CD4-positive, alpha-beta memory T cell (primary cell): ENCODE measurements at regions of chr14 and their contacts with region 1.

Region 1: DNA sequence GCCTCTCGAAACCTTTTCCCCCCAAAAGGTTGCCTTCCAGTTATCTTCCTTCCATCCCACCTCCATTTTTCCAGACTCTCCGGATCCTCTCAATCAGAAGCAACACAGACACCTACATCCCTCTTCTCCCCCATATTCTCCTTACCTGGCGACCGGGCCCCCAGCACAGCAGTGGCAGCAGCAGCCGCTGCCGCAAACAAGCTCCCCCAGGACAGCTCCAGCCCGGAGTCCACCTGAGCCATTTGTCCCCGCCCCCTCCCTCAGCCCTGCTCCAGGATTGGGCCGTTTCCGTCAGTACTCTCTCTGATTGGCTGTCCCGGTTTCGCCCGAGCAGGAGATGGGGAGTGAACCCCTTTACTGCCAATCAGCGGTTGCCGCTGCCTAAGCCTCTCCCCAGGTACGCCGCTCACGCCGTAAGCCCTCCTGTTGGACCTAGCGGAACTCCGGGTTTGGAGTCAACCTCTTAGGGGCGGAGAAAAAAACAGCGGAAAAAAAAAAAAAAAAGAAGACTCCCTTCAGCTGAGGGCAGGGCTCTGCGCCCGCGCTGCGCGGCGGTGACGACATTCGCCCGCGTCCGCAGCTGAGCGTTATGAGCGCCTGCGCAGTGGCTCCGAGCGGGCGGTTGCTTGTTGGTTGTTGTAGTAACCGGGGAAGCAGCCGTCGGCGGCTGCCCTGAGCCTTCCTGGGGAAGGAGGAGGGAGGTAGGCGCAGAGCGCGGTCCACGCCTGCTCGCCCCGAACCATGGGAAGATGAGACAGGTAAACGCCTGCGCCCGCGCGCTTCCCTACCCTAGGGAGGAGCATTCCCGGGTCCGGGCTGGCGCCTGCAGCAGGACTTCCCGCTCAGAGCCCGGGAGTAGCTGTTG is at the starts of genes ERG28 and TTLL5:
- DNase-seq: peak; percentile 97 to 99 (median 98)
- H3K4me3 ChIP-seq: peak within 1 kb of the TSS; percentile 92 to 95
- H3K4me3 Mint-ChIP-seq: peak within 1 kb of the TSS; percentile 93 to 99 (median 96)
- H3K27ac ChIP-seq: peak within 1 kb of the TSS; percentile 88
- H3K27ac Mint-ChIP-seq: peak within 1 kb of the TSS; percentile 96 to 99 (median 98)
- H3K4me1 ChIP-seq: peaks cover 20% of the 10 kb centered on the region
- H3K4me1 Mint-ChIP-seq: peaks cover 12 to 44% (median 28%) of the 10 kb centered on the region in 4 donors
- H3K27me3 ChIP-seq: no peaks in the 10 kb centered on the region
- H3K27me3 Mint-ChIP-seq: no peaks in the 10 kb centered on the region
- total RNA-seq, gene ERG28: 12.9 to 13.9 TPM
- total RNA-seq, gene TTLL5: 25.3 to 28.2 TPM

Region 2: DNA sequence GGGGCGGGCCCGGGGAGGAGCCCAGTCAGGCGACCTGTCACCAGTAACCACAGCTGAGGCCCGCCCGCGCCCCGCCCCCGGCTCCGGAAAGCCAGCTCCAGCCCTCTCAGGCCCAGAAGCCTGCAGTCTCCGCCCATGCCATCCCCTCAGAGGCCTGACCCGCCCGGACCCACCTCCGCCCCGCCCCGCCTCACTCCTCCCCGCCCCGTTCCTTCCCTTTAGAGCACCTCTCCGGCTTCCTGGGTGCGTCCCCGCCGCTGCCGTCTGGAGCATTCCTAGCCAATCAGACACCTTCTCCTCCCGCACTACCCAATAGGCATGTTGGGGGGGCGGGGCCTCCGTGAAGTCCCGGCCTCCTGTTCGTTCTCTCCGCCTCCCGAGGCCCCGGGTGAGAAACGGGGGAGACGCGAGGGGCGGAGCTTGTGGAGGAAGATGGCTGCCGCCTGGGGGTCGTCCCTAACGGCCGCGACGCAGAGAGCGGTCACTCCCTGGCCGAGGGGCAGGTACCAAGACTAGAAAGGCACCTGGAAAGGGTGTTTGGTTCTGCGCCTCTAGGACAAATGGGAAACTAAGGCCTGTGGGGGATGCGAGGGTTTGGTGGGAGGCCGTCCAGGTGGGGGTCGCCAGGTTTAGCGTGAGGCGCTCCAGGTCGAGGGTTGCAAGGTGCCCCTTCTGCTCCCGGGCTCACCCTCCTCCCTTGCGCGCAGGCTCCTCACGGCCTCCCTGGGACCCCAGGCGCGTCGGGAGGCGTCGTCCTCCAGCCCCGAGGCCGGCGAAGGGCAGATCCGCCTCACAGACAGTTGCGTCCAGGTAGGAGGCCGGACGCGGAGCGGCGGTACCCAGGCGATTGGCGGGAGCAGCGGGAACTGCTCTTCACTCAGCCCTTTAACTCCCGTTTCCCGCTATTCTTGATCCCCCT is 1167.3 kb before region 1 on chr14 and contains the start of gene ISCA2:
- CTCF ChIA-PET with region 1: no interaction called
- POLR2A ChIA-PET with region 1: no interaction called
- intact Hi-C with region 1: loop called (anchors 2 kb)
- DNase-seq: peak; percentile 97 to 100 (median 99)
- H3K4me3 ChIP-seq: peak within 1 kb of the TSS; percentile 79 to 89
- H3K4me3 Mint-ChIP-seq: no peak within 1 kb of the TSS
- H3K27ac ChIP-seq: peak within 1 kb of the TSS; percentile 86
- H3K27ac Mint-ChIP-seq: peak within 1 kb of the TSS in 6 of 7 donors; percentile 91 to 97 (median 94)
- H3K4me1 ChIP-seq: peaks cover 39% of the 10 kb centered on the region
- H3K4me1 Mint-ChIP-seq: peaks cover 24 to 31% (median 27%) of the 10 kb centered on the region in 4 donors
- H3K27me3 ChIP-seq: no peaks in the 10 kb centered on the region
- H3K27me3 Mint-ChIP-seq: no peaks in the 10 kb centered on the region
- total RNA-seq, gene ISCA2: 31.3 to 33.1 TPM

Region 3: GRCh38 chr14:75514673-75515628 is 145.9 kb before region 1 on chr14:
- CTCF ChIA-PET with region 1: interaction called, 6 read pairs
- POLR2A ChIA-PET with region 1: interaction called, 4 read pairs
- intact Hi-C with region 1: loop called (anchors 2 kb)
- DNase-seq: peak; percentile 59 to 70 (median 63)
- H3K4me3 ChIP-seq: peak overlapping the region; percentile 45 to 49
- H3K4me3 Mint-ChIP-seq: peak overlapping the region; percentile 88 to 97 (median 94)
- H3K27ac ChIP-seq: peak overlapping the region; percentile 73
- H3K27ac Mint-ChIP-seq: peak overlapping the region; percentile 87 to 99 (median 97)
- H3K4me1 ChIP-seq: peaks cover 33% of the 10 kb centered on the region
- H3K4me1 Mint-ChIP-seq: peaks cover 22 to 51% (median 33%) of the 10 kb centered on the region in 4 donors
- H3K27me3 ChIP-seq: no peaks in the 10 kb centered on the region
- H3K27me3 Mint-ChIP-seq: no peaks in the 10 kb centered on the region

Region 4: DNA sequence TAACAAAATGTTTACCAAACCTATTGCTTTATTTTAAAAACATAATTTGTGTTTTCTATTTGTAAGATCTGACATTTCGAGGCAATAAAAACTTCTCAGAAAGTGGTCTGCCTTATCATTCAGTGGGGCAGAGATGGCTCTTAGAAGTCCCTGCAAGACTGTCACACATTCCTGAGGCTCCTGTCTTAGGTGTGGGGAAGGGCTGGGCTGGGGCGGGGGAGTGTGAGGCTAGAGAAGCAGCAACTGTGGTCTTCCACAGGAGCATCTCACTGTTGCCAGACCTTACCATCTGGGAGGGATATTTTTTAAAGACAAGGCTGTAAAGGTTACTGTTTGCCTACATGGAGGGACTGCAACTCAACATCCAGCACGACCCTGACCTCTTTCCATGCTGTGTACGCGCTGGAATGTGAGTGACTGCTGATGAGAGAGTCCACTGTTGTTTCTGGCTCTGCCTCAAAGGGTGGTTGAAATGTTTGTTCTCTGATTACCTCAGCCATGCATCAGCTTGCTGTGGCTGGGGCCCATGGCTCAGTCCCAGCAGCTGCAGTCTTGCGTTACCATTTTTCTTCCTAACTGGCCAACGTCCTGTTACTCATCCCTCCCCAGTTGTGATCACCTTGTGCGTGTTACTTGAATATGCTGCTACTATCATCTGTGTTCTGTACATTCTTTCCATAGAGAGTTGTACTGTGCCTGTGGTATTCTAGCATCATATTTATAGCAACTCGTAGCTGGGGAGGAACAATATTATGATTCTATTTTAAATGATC is 12.6 kb before region 1 on chr14:
- CTCF ChIA-PET with region 1: interaction called, 19 read pairs
- POLR2A ChIA-PET with region 1: no interaction called
- intact Hi-C with region 1: no loop called
- DNase-seq: no peak
- H3K4me3 ChIP-seq: no peak overlapping the region
- H3K4me3 Mint-ChIP-seq: no peak overlapping the region
- H3K27ac ChIP-seq: no peak overlapping the region
- H3K27ac Mint-ChIP-seq: peak overlapping the region in 1 of 7 donors; percentile 10
- H3K4me1 ChIP-seq: no peaks in the 10 kb centered on the region
- H3K4me1 Mint-ChIP-seq: peaks cover 0 to 1% (median 0%) of the 10 kb centered on the region in 4 donors
- H3K27me3 ChIP-seq: no peaks in the 10 kb centered on the region
- H3K27me3 Mint-ChIP-seq: no peaks in the 10 kb centered on the region

Region 5: DNA sequence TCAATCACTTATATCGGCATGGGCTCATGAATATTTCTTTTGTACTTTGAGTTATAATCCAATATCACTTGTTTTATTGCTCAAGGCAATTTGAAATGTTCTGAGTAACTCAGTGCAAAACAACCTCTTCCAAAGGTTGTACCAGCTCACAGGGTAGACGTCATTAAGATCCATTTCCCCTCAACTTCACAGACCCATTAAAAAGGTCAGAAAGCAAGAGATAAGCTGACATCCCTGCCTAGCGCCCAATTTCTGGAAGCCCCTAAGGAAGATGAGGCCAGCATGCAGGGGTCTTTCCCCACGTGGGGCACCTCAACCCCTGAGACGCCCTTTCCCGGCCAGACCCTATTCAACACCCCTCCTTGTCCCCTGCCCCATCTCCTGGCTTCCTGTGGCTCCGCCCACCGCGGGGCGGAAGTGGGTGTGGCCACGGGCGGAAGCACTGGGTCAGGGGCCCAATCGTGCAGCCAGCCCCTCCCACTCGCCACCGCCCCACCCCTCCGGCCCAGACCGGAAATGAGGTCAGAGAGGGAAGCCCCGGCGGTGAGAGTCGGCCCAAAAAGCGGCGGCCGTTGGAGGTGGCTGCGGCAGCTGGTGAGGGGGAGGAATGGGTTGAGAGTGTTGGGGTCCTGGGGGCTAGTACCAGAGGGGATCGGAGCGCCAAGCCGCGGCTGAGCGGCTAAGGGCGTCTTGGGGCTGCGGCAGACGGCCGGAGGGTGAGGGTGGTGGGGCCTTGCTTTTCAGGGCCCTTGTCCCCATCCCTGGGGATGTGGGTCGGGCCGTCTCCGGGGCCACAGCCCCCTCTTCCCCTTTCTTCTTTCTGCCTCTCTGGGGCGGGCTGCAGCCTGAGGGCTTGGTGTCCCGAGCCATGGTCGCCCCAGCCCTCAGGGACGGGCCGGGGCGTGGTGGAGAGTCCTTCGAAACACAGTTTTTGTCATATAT is 490.8 kb after region 1 on chr14 and contains the start of gene GPATCH2L:
- CTCF ChIA-PET with region 1: no interaction called
- POLR2A ChIA-PET with region 1: no interaction called
- intact Hi-C with region 1: loop called (anchors 2 kb)
- DNase-seq: peak; percentile 94 to 97 (median 96)
- H3K4me3 ChIP-seq: peak within 1 kb of the TSS; percentile 85 to 88
- H3K4me3 Mint-ChIP-seq: peak within 1 kb of the TSS; percentile 92 to 99 (median 96)
- H3K27ac ChIP-seq: peak within 1 kb of the TSS; percentile 94
- H3K27ac Mint-ChIP-seq: peak within 1 kb of the TSS; percentile 93 to 99 (median 97)
- H3K4me1 ChIP-seq: peaks cover 51% of the 10 kb centered on the region
- H3K4me1 Mint-ChIP-seq: peaks cover 37 to 59% (median 49%) of the 10 kb centered on the region in 4 donors
- H3K27me3 ChIP-seq: no peaks in the 10 kb centered on the region
- H3K27me3 Mint-ChIP-seq: no peaks in the 10 kb centered on the region
- total RNA-seq, gene GPATCH2L: 66.0 to 70.1 TPM